ENCODE measurements at regions of chr10 and their contacts with region 1.

Region 1: GRCh38 chr10:95864906-95865813 is 42.6 kb upstream of the CC2D2B start:
- DNase-seq: peak; percentile 55
- H3K4me3 Mint-ChIP-seq: no peak overlapping the region
- H3K27ac Mint-ChIP-seq: peak overlapping the region; percentile 0
- H3K4me1 Mint-ChIP-seq: peaks cover 14% of the 10 kb centered on the region
- H3K27me3 Mint-ChIP-seq: no peaks in the 10 kb centered on the region

Region 2: DNA sequence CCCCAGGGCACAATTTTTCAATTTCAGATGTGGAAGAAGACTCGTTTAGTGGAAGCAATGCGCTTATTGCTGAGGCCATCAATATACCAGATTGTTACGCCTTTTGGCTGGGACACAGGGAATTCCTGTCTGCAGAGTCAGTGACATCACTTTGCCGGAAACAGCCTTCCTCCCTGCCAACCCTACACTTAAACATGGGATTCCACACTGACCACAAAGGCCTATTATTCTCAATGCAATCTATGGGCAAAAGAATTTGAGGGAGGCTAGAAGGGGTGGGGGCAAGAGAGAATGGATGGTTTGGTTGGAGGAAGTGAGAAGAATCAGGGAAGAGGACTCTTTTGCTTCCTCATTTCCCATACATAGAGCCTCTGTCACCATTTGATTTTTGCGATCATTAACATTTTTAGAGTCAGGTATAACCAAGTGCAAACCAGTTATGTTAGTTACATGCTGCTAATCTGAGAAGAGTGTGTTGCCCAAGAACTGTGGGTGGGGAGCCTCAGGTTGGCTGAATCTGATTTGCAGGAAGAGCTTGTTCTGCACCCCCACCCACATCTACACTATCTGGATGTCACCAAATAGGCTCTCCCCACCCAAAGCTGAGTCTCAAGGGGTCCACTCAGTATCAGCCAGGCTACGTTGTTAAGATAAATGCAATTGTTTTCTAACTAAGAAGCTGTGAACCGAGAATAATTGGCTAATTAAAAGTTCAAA is 51.0 kb before region 1 on chr10:
- CTCF ChIA-PET with region 1: no interaction called
- POLR2A ChIA-PET with region 1: no interaction called
- DNase-seq: no peak
- H3K4me3 Mint-ChIP-seq: no peak overlapping the region
- H3K27ac Mint-ChIP-seq: no peak overlapping the region
- H3K4me1 Mint-ChIP-seq: no peaks in the 10 kb centered on the region
- H3K27me3 Mint-ChIP-seq: peaks cover 11% of the 10 kb centered on the region

Region 3: DNA sequence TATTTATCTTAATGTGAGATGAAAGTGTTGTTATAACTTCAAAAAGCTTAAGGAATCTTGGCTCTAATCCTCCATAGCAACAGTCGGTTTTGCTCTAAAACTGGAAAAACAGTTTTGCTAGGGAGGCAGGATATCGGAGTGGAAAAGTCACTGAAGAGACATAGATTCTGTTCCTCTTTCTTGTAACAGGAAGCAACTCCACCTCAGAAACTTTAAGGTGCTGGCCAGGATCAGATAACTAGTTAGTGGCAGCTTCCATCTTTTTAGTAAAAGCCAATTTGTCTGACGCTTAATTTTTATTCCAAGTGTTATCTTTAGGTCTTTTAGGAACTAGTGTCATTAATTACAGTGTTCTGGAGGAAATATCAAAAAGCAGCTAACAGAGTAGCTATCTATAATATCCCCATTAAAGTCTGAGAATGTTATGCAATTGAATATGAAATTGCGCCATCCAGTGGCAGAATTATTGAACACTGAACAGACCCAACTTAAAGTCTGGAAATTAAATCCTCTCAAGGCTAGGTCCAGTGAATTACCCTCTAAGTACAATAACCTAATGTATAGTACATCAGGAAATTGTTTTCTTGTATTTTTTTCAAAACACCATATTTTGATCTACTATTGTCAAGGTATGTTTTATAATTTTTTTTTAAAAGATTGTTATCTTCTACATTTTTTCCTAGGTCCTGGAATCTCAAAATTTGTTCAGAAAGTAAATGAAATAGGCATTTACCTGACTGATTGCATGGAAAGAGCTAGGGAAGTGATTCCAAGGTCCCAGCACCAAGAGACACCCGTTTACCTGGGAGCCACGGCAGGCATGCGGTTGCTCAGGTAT is 23.3 kb before region 1 on chr10:
- CTCF ChIA-PET with region 1: interaction called, 11 read pairs
- POLR2A ChIA-PET with region 1: no interaction called
- DNase-seq: peak; percentile 56
- H3K4me3 Mint-ChIP-seq: no peak overlapping the region
- H3K27ac Mint-ChIP-seq: no peak overlapping the region
- H3K4me1 Mint-ChIP-seq: peaks cover 5% of the 10 kb centered on the region
- H3K27me3 Mint-ChIP-seq: peaks cover 4% of the 10 kb centered on the region

Measured in activated CD4-positive, alpha-beta T cell treated with anti-CD3 and anti-CD28 coated beads, Interleukin-2, amount 10 ng/mL, durations not matched to agents 7 days and 5 days (primary cell).